Motor neuron (in vitro differentiated cells): ENCODE measurements at regions of chr13 and their contacts with region 1.

Region 1: DNA sequence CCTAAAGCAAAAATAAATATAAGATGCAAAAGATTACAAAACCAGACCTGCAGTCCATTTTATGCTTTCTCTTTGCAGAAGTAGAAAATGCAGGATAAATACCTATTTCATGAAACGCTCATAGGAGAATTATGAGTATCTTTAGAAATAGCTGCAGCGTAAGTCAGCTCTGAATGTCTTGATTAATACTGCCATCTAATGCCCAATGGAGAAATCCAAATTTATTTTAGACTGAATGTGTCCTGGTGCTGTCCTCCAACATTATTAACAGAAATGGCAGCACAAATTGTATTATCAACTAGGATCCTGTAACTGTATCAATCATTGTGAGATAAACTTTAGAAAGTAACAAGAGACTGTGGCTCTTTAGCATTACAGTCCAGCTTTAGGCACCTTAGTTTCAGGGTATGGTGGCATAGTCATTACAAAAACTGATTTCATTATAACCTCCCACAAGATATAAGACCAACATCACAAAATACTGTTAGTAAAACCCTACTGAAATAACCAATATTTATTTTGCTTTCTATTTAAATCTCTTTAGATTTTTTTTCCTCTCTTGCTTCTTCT is 162.1 kb upstream of the MIR17HG start:
- ATAC-seq: peak in 2 of 8 experiments; percentile 48 to 57
- H3K4me3 ChIP-seq: no peak overlapping the region
- H3K27ac ChIP-seq: no peak overlapping the region
- H3K4me1 ChIP-seq: peaks cover 0 to 9% of the 10 kb centered on the region in 2 donors

Region 2: DNA sequence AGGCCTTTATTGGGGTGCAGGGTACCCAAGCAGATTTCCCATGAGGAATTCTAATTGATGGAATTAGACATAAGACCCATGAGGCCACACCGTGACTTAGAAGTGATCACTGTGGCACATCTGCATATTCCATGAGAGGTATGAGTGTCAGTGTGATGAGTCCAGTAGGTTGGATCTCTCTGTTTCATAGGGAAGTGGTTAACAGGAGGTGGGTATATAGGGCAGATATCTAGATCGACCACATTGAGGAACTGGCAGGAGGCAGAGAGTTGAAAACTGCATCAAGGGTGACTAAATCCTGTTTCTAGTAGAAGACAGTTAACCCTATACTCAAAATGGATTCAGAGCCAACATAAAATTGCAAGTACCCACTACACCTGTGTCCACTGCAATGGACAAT is 93.5 kb after region 1 on chr13:
- in situ Hi-C with region 1: loop called in 1 of 9 experiments (anchors 25 kb)
- ATAC-seq: no peak
- H3K4me3 ChIP-seq: no peak overlapping the region
- H3K27ac ChIP-seq: no peak overlapping the region
- H3K4me1 ChIP-seq: no peaks in the 10 kb centered on the region